Common myeloid progenitor, CD34-positive (primary cell): ENCODE measurements at regions of chr11 and their contacts with region 1.

Region 1: DNA sequence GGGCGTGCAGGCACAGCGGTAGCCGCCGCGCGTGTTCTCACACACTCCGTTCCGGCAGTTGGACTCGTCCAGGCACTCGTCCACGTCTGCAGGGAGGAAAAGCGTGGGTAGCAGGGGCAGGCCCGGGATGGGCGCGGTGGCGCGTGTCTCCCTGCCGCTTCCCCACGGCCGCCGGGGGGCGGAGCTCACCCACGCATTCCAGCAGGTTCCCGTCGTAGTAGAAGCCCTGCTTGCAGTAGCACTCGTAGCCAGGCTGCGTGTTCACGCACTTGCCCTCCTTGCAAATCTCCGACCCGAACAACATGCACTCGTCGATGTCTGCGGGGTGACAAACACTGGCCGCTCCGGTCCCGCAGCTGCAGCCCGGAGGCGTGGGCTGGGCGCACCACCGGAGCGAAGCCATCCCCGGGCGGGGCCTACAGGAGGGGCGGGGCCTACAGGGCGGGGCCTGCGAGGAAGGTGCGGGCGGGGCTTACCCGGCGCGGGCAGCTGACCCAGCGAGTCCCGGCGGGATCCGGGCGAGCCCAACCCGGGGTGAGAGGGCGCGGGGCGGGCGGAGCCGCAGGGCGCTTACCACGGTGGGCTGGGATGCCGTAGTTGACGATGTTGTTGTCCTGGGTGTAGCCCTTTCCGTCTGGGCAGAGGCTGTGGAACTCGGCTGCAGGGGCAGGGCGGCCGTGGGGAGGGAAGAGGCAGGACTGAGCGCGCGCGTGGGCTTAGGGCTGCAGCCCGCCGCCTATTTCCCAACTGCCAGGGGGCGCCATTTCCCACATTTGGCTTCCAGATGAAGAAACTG is 15.6 kb downstream of the SCYL1 start:
- DNase-seq: peak; percentile 82 to 89 (median 87)
- H3K4me3 ChIP-seq: peak overlapping the region; percentile 41 to 87 (median 72)
- H3K27ac ChIP-seq: peak overlapping the region in 1 of 2 experiments; percentile 49
- H3K4me1 ChIP-seq: peaks cover 3 to 28% (median 25%) of the 10 kb centered on the region in 4 experiments
- H3K27me3 ChIP-seq: no peaks in the 10 kb centered on the region

Region 2: GRCh38 chr11:65530157-65530496 is 10.4 kb before region 1 on chr11:
- CTCF ChIA-PET with region 1: interaction called, 24 read pairs
- POLR2A ChIA-PET with region 1: interaction called, 3 read pairs
- DNase-seq: peak in 1 of 3 donors; percentile 26
- H3K4me3 ChIP-seq: no peak overlapping the region
- H3K27ac ChIP-seq: no peak overlapping the region
- H3K4me1 ChIP-seq: peaks cover 0 to 13% (median 12%) of the 10 kb centered on the region in 4 experiments
- H3K27me3 ChIP-seq: no peaks in the 10 kb centered on the region

Region 3: GRCh38 chr11:65551572-65552398 is 11.3 kb after region 1 on chr11:
- CTCF ChIA-PET with region 1: interaction called, 39 read pairs
- POLR2A ChIA-PET with region 1: interaction called, 13 read pairs
- DNase-seq: peak; percentile 49 to 87 (median 81)
- H3K4me3 ChIP-seq: no peak overlapping the region
- H3K27ac ChIP-seq: no peak overlapping the region
- H3K4me1 ChIP-seq: peaks cover 2 to 78% (median 71%) of the 10 kb centered on the region in 4 experiments
- H3K27me3 ChIP-seq: no peaks in the 10 kb centered on the region

Region 4: DNA sequence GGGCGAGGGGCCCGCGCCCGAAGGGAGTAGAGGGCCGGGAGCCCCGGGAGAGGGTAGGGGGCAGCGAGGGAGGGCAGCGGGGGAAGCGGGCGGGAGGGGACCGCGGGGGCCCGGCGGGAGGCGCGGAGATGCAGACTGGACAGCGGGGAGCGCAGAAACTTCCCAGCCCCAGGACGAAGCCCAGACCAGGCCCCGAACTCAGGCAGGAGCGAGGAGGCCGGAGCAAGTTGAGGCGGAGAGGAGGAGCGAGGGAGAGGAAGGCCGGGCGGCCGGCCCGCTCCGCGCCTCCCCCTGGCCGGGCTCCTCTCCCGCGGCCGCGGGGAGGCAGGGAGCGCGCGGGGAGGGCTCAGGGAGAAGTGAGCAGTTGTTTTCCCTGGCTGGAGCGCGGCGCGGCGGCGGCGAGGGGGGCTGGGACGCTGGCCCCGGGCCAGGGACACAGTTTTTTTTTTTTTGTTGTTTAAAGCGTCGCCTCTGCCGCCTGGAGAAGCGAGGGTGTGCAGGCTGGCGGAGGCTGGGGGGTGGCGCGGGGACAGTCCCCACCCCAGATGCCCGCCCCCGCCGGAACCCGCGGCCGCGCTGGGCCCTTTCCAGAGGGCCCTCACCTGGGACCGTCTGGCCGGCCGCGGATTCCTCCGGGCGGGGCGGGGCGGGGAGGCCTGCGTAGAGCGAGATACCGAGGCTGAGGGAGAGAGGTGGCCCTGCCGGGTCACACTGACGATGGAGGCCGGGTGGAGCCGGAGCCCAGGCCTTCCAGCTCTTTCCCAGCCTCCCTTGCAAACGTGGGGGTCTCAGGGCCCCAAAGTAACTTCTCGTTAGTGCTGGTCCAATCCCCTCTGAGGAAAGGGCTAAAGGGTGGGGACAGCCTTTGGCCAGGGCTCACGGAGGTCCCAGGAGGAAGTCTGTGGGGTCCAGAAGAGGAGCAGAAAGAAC is 17.8 kb after region 1 on chr11 and contains the start of gene LTBP3:
- CTCF ChIA-PET with region 1: interaction called, 239 read pairs
- POLR2A ChIA-PET with region 1: interaction called, 13 read pairs
- DNase-seq: peak in 2 of 3 donors; percentile 45 to 50
- H3K4me3 ChIP-seq: peak within 1 kb of the TSS; percentile 51 to 81 (median 62)
- H3K27ac ChIP-seq: peak within 1 kb of the TSS; percentile 54 to 76
- H3K4me1 ChIP-seq: peaks cover 0 to 69% (median 62%) of the 10 kb centered on the region in 4 experiments
- H3K27me3 ChIP-seq: no peaks in the 10 kb centered on the region

Region 5: DNA sequence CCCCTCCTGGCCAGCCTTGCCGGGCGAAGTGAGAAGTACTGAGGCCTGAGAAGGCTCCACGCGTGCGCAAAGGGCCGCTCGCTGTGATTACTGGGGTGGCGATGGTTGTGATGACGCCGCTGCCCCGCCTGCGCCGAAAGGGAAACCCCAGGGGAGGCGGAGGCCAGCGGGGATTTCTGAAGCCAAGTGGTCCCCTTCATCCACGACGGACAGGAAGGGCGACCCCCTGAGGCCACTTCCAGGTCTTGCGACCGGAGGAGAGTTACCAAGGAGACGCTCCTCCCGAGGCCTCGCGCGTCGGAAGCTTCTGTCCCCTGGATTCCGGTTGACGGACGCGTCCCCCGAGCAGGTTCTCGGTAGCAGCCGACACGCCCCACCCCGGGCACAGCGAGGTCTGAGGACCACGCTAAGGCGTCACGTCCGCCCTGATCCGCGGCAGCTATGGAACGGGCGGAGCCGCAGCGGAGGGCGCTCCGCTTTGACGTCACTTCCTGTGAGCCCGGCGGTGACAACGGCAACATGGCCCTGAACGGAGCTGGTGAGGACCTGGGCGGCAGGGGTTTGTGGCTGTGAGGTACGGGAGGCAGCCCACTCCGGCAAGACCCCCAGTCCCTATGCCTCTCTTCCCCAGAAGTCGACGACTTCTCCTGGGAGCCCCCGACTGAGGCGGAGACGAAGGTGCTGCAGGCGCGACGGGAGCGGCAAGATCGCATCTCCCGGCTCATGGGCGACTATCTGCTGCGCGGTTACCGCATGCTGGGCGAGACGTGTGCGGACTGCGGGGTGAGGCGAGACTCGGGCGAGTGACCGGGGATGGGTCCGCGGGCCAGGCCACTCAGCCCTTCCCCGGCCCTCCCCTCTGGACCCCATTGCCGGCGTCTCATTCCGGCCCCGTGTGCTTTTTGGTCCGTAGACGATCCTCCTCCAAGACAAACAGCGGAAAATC is 29.8 kb after region 1 on chr11 and contains the start of gene ZNRD2:
- CTCF ChIA-PET with region 1: interaction called, 262 read pairs
- POLR2A ChIA-PET with region 1: interaction called, 8 read pairs
- DNase-seq: peak; percentile 99 to 100 (median 99)
- H3K4me3 ChIP-seq: peak within 1 kb of the TSS; percentile 76 to 99 (median 91)
- H3K27ac ChIP-seq: peak within 1 kb of the TSS; percentile 81 to 91
- H3K4me1 ChIP-seq: peaks cover 18 to 73% (median 64%) of the 10 kb centered on the region in 4 experiments
- H3K27me3 ChIP-seq: no peaks in the 10 kb centered on the region

Region 6: GRCh38 chr11:65593518-65594298 is 53.2 kb after region 1 on chr11:
- CTCF ChIA-PET with region 1: interaction called, 262 read pairs
- POLR2A ChIA-PET with region 1: interaction called, 3 read pairs
- DNase-seq: peak in 2 of 3 donors; percentile 59 to 66
- H3K4me3 ChIP-seq: no peak overlapping the region
- H3K27ac ChIP-seq: no peak overlapping the region
- H3K4me1 ChIP-seq: peaks cover 0 to 21% (median 19%) of the 10 kb centered on the region in 4 experiments
- H3K27me3 ChIP-seq: no peaks in the 10 kb centered on the region